ENCODE measurements at regions of chr12 and their contacts with region 1.

Region 1: GRCh38 chr12:109789526-109790048 is 43.6 kb downstream of the TRPV4 start:
- DNase-seq: no peak
- ATAC-seq: no peak
- H3K4me3 ChIP-seq: no peak overlapping the region
- H3K4me3 Mint-ChIP-seq: no peak overlapping the region
- H3K27ac ChIP-seq: no peak overlapping the region
- H3K27ac Mint-ChIP-seq: no peak overlapping the region
- H3K4me1 ChIP-seq: no peaks in the 10 kb centered on the region
- H3K4me1 Mint-ChIP-seq: no peaks in the 10 kb centered on the region
- H3K27me3 ChIP-seq: peaks cover 0 to 5% of the 10 kb centered on the region in 2 experiments
- H3K27me3 Mint-ChIP-seq: peaks cover 26% of the 10 kb centered on the region
- CTCF ChIP-seq: no peak

Region 2: GRCh38 chr12:109814600-109815150 is 25.1 kb after region 1 on chr12:
- CTCF ChIA-PET with region 1: no interaction called
- POLR2A ChIA-PET with region 1: no interaction called
- intact Hi-C with region 1: loop called in 1 of 2 experiments (anchors 2 kb)
- DNase-seq: no peak
- ATAC-seq: no peak
- H3K4me3 ChIP-seq: no peak overlapping the region
- H3K4me3 Mint-ChIP-seq: no peak overlapping the region
- H3K27ac ChIP-seq: no peak overlapping the region
- H3K27ac Mint-ChIP-seq: no peak overlapping the region
- H3K4me1 ChIP-seq: no peaks in the 10 kb centered on the region
- H3K4me1 Mint-ChIP-seq: no peaks in the 10 kb centered on the region
- H3K27me3 ChIP-seq: peaks cover 0 to 4% of the 10 kb centered on the region in 2 experiments
- H3K27me3 Mint-ChIP-seq: no peaks in the 10 kb centered on the region
- CTCF ChIP-seq: no peak

Measured in CD4-positive, alpha-beta T cell (primary cell).